ENCODE measurements at regions of chr10 and their contacts with region 1.

Region 1: GRCh38 chr10:18214691-18215563 is 74.7 kb downstream of the CACNB2 start:
- DNase-seq: peak; percentile 46
- H3K4me3 ChIP-seq: no peak overlapping the region; a peak in 1 of 4 replicates
- H3K27ac ChIP-seq: no peak overlapping the region
- H3K4me1 ChIP-seq: no peaks in the 10 kb centered on the region; a peak in 1 of 4 replicates
- H3K27me3 ChIP-seq: no peaks in the 10 kb centered on the region; the same call in 1 of the 2 replicates
- CTCF ChIP-seq: peak; percentile 93
- EP300 ChIP-seq: no peak
- RAD21 ChIP-seq: peak; percentile 93

Region 2: DNA sequence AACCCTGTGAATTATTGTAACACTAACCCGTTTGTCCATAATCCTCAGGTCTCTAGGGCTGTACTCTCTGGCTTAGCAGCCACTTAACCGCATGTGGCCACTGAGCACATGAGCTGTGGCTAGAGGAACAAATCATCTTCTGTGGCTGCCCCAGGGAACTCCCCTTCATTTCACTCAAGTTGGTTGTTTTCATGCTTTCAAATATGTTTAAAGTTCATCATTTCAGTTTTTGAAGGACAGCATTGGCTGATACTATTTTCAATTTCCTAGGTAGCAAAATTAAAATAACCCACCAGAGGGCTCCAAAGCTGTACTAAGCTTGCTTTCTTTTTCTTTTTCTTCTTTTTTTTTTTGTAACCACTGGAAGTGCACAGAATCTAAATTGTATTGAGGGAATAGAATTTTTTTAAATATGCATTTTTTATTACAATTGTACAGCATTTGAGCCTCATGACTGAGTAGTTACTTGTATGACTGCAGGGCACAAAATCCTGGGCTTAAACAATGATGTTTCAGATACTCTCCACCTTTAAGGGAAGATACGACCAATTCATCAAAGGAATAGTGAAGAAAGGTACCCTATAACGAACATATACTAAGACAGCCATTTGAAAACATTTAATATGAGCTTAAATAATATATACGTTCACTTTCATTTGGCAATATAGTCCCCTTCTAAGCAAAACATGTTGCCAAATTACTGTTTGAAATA is 367.2 kb before region 1 on chr10:
- CTCF ChIA-PET with region 1: interaction called, 114 read pairs
- POLR2A ChIA-PET with region 1: no interaction called
- DNase-seq: peak; percentile 32
- H3K4me3 ChIP-seq: no peak overlapping the region; a peak in 1 of 4 replicates
- H3K27ac ChIP-seq: no peak overlapping the region
- H3K4me1 ChIP-seq: peaks cover 0 to 5% of the 10 kb centered on the region in 2 experiments; a peak in 3 of 4 replicates
- H3K27me3 ChIP-seq: no peaks in the 10 kb centered on the region
- CTCF ChIP-seq: peak; percentile 71
- EP300 ChIP-seq: no peak
- RAD21 ChIP-seq: peak; percentile 76

Region 3: DNA sequence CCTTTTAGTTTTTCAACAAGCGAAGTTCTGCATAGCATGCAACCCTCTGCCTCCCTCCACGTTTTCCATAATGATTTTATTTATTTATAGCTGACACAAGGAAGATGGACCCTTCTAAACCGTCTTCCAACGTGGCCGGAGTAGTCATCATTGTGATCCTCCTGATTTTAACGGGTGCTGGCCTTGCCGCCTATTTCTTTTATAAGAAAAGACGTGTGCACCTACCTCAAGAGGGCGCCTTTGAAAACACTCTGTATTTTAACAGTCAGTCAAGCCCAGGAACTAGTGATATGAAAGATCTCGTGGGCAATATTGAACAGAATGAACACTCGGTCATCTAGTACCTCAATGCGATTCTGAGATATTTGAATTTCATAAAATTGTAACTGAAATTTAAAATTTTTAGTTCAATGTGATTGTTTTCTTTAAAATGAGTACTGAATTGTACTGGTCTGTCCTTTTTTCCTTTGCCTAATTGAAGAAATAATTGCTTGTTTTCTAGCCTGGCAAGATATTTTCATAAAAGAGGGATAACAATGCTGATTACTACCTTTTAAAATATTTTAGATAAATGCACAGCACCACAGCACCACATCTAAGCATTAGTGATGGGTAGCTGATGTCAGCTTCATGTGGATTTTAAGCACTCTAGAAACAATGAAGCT is 304.7 kb before region 1 on chr10:
- CTCF ChIA-PET with region 1: interaction called, 22 read pairs
- POLR2A ChIA-PET with region 1: no interaction called
- DNase-seq: peak; percentile 38
- H3K4me3 ChIP-seq: no peak overlapping the region
- H3K27ac ChIP-seq: no peak overlapping the region
- H3K4me1 ChIP-seq: no peaks in the 10 kb centered on the region; a peak in 1 of 4 replicates
- H3K27me3 ChIP-seq: no peaks in the 10 kb centered on the region
- CTCF ChIP-seq: peak; percentile 74
- EP300 ChIP-seq: no peak
- RAD21 ChIP-seq: peak; percentile 63

Region 4: DNA sequence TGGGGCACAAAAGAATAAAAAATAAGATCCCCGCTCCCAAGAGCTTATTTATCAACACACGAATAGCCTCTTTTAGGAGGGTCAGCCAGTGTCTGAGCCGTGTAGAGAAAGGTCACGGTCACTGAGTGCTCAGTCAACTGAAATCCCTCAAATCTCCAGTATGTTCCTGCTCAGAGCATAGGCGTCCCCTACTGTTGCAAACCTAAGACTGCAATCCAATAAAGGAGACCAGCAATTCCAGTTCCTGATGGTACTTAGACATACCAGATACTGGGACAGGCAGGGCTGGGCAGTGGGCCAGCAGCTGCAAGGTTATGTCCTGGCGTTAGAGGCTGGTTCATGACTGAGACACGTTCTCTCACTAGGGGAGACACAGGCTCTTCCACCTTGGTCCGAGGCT is 18.8 kb after region 1 on chr10:
- CTCF ChIA-PET with region 1: interaction called, 19 read pairs
- POLR2A ChIA-PET with region 1: no interaction called
- DNase-seq: peak; percentile 21
- H3K4me3 ChIP-seq: no peak overlapping the region
- H3K27ac ChIP-seq: no peak overlapping the region
- H3K4me1 ChIP-seq: peaks cover 5 to 24% of the 10 kb centered on the region in 2 experiments; a peak in 3 of 4 replicates
- H3K27me3 ChIP-seq: no peaks in the 10 kb centered on the region
- CTCF ChIP-seq: no peak
- EP300 ChIP-seq: no peak
- RAD21 ChIP-seq: no peak

Region 5: GRCh38 chr10:18279173-18279572 is 64.2 kb after region 1 on chr10:
- CTCF ChIA-PET with region 1: no interaction called
- POLR2A ChIA-PET with region 1: no interaction called
- DNase-seq: no peak
- H3K4me3 ChIP-seq: no peak overlapping the region
- H3K27ac ChIP-seq: no peak overlapping the region
- H3K4me1 ChIP-seq: no peaks in the 10 kb centered on the region
- H3K27me3 ChIP-seq: no peaks in the 10 kb centered on the region
- CTCF ChIP-seq: no peak
- EP300 ChIP-seq: no peak
- RAD21 ChIP-seq: no peak

Region 6: DNA sequence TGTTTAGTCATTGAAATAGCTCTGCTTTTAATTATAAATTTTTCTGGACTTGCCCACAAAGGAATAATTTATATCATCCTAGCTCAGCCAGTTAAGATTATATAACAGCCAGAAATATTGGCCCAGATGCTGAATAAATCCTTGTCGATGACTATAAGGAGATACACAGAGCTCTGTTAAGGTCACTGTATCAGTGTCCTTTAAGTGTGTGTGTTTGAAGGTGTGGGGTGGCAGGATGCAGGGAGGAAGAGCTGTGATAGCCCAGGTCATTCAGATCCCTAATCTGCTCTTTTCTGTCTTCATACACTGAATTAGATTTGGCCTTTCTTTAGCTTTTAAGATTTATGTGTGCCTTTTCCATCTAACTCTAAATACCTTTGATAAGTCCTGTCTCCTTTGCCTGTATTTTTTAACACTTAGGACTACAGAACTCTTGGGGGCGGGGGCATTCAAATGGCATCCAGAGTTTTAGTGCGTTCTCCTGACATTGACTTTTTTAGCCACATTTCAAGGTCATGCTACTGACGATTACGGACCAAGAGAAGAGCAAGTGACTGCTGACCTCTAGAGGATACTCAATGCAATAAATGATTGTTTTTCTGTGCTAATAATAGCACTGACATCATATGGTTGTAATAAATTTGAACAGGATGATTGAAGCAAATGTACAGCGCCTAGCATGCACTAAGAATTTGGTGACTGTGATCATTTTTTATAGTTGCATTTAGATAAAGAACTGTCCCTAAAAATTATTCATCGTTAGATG is 97.6 kb after region 1 on chr10:
- CTCF ChIA-PET with region 1: interaction called, 15 read pairs
- POLR2A ChIA-PET with region 1: no interaction called
- DNase-seq: peak; percentile 64
- H3K4me3 ChIP-seq: no peak overlapping the region; a peak in 1 of 4 replicates
- H3K27ac ChIP-seq: no peak overlapping the region
- H3K4me1 ChIP-seq: peaks cover 0 to 6% of the 10 kb centered on the region in 2 experiments; a peak in 2 of 4 replicates
- H3K27me3 ChIP-seq: no peaks in the 10 kb centered on the region
- CTCF ChIP-seq: peak; percentile 65
- EP300 ChIP-seq: no peak
- RAD21 ChIP-seq: peak; percentile 79